ENCODE measurements at regions of chr1 and their contacts with region 1.

Region 1: GRCh38 chr1:223123011-223123610 is 19.9 kb downstream of the TLR5 start:
- DNase-seq: no peak
- ATAC-seq: no peak
- H3K4me3 ChIP-seq: no peak overlapping the region
- H3K27ac ChIP-seq: no peak overlapping the region
- H3K4me1 ChIP-seq: no peaks in the 10 kb centered on the region
- CTCF ChIP-seq: no peak
- EP300 ChIP-seq: no peak
- POLR2A ChIP-seq: no peak
- RAD21 ChIP-seq: no peak

Region 2: DNA sequence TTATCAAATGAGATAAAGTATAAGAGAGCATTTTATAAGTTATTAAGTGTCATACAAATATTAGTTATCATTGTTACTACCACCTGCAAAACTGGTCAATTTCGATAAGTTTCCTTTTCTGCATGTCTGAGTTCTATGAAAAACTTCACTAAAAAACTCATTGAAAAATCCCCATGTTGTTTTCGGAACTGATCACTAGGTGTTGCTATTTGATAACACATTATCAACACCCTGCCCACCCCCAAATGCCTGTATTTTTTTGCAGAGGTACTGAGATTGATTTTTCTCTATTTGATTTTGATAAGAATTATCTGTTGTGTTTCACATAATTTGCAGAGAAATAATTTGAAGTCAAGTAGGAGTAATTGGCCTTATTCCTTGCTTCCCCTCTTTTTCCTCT is 330.4 kb before region 1 on chr1:
- CTCF ChIA-PET with region 1: interaction called, 45 read pairs
- POLR2A ChIA-PET with region 1: no interaction called
- DNase-seq: peak; percentile 19 to 45
- ATAC-seq: peak in 1 of 2 experiments; percentile 54; a peak in 2 of 6 replicates
- H3K4me3 ChIP-seq: no peak overlapping the region
- H3K27ac ChIP-seq: no peak overlapping the region
- H3K4me1 ChIP-seq: 0 out of 3 replicates have a peak, but pooled peaks cover under 1% of the 10 kb centered on the region
- CTCF ChIP-seq: peak; percentile 90
- EP300 ChIP-seq: no peak
- POLR2A ChIP-seq: no peak
- RAD21 ChIP-seq: peak; percentile 84 to 94

Region 3: DNA sequence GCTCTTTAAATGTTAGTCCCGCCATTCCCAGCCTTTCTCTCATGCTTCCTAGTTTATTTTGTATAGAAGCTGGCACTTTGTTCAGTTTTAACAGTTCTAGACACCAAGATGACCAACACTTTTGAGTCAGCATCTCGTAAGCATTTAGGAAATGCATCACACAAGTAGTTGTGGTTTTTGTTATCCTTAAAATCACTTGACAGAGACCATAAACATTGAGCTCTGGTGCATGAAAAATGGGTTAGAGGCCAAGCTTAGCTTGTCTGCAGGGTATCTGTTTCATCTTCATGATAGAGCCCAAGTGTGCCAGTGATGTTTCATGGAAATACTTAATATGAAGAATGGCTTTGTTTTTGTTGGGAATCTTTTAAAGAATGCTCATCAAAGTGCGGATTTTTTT is 148.6 kb before region 1 on chr1:
- CTCF ChIA-PET with region 1: no interaction called
- POLR2A ChIA-PET with region 1: no interaction called
- DNase-seq: no peak
- ATAC-seq: no peak
- H3K4me3 ChIP-seq: no peak overlapping the region
- H3K27ac ChIP-seq: no peak overlapping the region
- H3K4me1 ChIP-seq: no peaks in the 10 kb centered on the region
- CTCF ChIP-seq: no peak
- EP300 ChIP-seq: no peak
- POLR2A ChIP-seq: no peak
- RAD21 ChIP-seq: no peak

Region 4: DNA sequence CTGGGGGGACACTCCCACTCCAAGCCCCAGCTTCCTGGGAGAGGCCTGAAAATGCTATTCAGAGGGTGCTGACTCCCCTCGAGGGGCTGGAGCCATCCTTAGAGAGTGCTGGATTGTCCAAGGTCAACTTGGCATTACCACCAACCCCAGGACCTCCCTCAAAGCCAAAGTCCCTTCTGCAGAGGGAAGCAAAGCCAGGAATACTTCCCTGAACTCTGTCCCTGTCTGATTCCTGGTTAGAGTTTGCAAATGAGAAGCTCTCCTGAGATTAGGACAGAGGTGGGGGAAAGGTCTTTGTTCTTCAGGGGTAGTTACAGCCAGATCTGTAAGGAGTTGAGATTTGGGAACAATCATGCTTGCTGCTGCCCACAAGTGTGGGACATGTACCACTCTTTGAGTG is 25.4 kb before region 1 on chr1:
- CTCF ChIA-PET with region 1: interaction called, 21 read pairs
- POLR2A ChIA-PET with region 1: no interaction called
- DNase-seq: no peak
- ATAC-seq: no peak
- H3K4me3 ChIP-seq: no peak overlapping the region
- H3K27ac ChIP-seq: no peak overlapping the region
- H3K4me1 ChIP-seq: no peaks in the 10 kb centered on the region
- CTCF ChIP-seq: no peak
- EP300 ChIP-seq: no peak
- POLR2A ChIP-seq: no peak
- RAD21 ChIP-seq: no peak

Region 5: DNA sequence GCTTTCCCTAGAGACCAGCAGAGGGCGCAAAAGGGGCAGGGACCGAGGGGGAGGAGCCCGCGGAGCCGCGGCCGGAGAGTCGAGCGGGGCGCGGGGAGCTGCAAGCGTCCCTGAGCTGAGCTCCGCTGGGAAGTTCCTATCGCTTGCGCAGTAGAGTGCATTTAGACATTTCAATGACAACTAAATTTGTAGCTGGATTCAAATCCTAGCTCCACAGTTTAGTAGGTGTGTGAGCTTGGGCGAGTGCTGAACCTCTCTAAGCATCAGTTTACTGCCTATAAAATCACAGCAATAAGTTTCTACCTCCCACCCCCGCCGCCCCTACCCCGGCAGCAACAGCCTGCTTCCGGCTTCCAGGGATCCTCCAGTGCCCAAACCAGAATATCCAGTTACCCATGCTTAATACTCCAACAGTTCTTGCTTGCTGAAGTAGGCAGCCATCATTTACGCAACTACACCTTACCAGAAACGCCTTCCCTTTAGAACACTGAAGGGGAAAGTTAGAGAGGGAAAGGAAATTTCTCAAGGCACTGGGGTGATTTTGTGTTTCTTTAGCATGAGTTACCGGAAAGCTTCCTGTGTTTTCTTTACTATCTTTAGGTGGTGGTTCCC is 10.8 kb after region 1 on chr1:
- CTCF ChIA-PET with region 1: interaction called, 77 read pairs
- POLR2A ChIA-PET with region 1: no interaction called
- DNase-seq: peak; percentile 78 to 87
- ATAC-seq: peak; percentile 77 to 90
- H3K4me3 ChIP-seq: peak overlapping the region; percentile 49
- H3K27ac ChIP-seq: peak overlapping the region; percentile 54 to 55; a peak in 4 of 6 replicates
- H3K4me1 ChIP-seq: peaks cover 38% of the 10 kb centered on the region
- CTCF ChIP-seq: peak; percentile 93
- EP300 ChIP-seq: no peak
- POLR2A ChIP-seq: no peak
- RAD21 ChIP-seq: peak; percentile 71 to 82

Region 6: GRCh38 chr1:223244366-223245103 is 121.4 kb after region 1 on chr1:
- CTCF ChIA-PET with region 1: no interaction called
- POLR2A ChIA-PET with region 1: no interaction called
- DNase-seq: no peak
- ATAC-seq: peak; percentile 30 to 53; a peak in 4 of 6 replicates
- H3K4me3 ChIP-seq: no peak overlapping the region
- H3K27ac ChIP-seq: no peak overlapping the region
- H3K4me1 ChIP-seq: no peaks in the 10 kb centered on the region
- CTCF ChIP-seq: peak; percentile 19; the same call in 2 of the 3 replicates
- EP300 ChIP-seq: no peak
- POLR2A ChIP-seq: no peak
- RAD21 ChIP-seq: peak; percentile 20 to 37; a peak in 2 of 5 replicates

Region 7: DNA sequence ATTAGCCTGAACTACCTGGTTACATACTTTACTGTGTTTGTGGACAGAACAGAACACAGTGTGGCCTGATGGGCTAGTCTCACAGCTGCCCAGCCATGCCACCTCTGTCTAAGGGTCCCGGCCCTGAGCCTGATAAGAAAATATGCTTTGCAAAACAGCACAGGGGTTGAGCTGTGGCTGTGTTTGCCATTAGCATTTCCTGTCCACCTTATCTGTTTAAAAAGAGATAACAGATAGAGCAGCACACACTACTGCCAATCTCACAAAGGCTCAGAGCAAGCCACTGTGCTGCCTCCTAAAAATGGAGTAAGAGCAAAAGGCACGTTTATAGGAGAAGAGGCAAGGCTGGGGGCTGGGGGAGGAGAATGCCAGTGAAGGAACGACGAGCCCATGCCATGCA is 145.9 kb after region 1 on chr1:
- CTCF ChIA-PET with region 1: no interaction called
- POLR2A ChIA-PET with region 1: no interaction called
- DNase-seq: no peak
- ATAC-seq: no peak
- H3K4me3 ChIP-seq: no peak overlapping the region
- H3K27ac ChIP-seq: no peak overlapping the region
- H3K4me1 ChIP-seq: no peaks in the 10 kb centered on the region; the same call in 2 of the 3 replicates
- CTCF ChIP-seq: no peak
- EP300 ChIP-seq: no peak
- POLR2A ChIP-seq: no peak
- RAD21 ChIP-seq: no peak

Measured in A549 (cell line).